Naive thymus-derived CD8-positive, alpha-beta T cell (primary cell): ENCODE measurements at regions of chr1 and their contacts with region 1.

Region 1: DNA sequence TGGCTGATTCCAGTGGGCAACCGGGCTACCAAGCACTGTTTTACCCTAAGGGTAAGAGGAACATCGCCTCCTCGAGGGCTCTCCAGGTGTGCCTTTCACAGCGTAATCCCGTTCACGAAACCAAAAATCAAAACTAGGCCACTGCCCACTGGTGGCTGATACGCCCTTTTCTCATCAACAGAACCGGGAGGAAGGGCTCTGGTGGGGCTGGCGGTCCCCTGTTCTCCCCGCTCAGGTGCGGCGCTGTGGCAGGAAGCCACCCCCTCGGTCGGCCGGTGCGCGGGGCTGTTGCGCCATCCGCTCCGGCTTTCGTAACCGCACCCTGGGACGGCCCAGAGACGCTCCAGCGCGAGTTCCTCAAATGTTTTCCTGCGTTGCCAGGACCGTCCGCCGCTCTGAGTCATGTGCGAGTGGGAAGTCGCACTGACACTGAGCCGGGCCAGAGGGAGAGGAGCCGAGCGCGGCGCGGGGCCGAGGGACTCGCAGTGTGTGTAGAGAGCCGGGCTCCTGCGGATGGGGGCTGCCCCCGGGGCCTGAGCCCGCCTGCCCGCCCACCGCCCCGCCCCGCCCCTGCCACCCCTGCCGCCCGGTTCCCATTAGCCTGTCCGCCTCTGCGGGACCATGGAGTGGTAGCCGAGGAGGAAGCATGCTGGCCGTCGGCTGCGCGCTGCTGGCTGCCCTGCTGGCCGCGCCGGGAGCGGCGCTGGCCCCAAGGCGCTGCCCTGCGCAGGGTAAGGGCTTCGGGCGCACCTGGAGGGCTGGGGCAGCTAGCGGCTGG is at the start of gene IL6R:
- DNase-seq: peak; percentile 57 to 85 (median 74)
- ATAC-seq: peak; percentile 59 to 71
- H3K4me3 Mint-ChIP-seq: peak within 1 kb of the TSS; percentile 88 to 96 (median 93)
- H3K27ac Mint-ChIP-seq: peak within 1 kb of the TSS; percentile 92 to 98 (median 94)
- H3K4me1 Mint-ChIP-seq: peaks cover 42 to 87% (median 78%) of the 10 kb centered on the region in 4 donors
- H3K27me3 Mint-ChIP-seq: no peaks in the 10 kb centered on the region
- polyA plus RNA-seq, gene IL6R: 20.1 to 44.1 (median 28.4) TPM

Region 2: GRCh38 chr1:154324669-154325582 is 80.2 kb before region 1 on chr1 and contains the start of gene ATP8B2:
- POLR2A ChIA-PET with region 1: interaction called, 14 read pairs
- DNase-seq: peak; percentile 72 to 91 (median 82)
- ATAC-seq: peak; percentile 48 to 54
- H3K4me3 Mint-ChIP-seq: peak within 1 kb of the TSS; percentile 86 to 99 (median 95)
- H3K27ac Mint-ChIP-seq: peak within 1 kb of the TSS; percentile 84 to 98 (median 94)
- H3K4me1 Mint-ChIP-seq: peaks cover 23 to 49% (median 46%) of the 10 kb centered on the region in 4 donors
- H3K27me3 Mint-ChIP-seq: peaks cover 0 to 3% (median 0%) of the 10 kb centered on the region in 5 donors
- polyA plus RNA-seq, gene ATP8B2: 48.5 to 65.1 (median 55.6) TPM

Region 3: DNA sequence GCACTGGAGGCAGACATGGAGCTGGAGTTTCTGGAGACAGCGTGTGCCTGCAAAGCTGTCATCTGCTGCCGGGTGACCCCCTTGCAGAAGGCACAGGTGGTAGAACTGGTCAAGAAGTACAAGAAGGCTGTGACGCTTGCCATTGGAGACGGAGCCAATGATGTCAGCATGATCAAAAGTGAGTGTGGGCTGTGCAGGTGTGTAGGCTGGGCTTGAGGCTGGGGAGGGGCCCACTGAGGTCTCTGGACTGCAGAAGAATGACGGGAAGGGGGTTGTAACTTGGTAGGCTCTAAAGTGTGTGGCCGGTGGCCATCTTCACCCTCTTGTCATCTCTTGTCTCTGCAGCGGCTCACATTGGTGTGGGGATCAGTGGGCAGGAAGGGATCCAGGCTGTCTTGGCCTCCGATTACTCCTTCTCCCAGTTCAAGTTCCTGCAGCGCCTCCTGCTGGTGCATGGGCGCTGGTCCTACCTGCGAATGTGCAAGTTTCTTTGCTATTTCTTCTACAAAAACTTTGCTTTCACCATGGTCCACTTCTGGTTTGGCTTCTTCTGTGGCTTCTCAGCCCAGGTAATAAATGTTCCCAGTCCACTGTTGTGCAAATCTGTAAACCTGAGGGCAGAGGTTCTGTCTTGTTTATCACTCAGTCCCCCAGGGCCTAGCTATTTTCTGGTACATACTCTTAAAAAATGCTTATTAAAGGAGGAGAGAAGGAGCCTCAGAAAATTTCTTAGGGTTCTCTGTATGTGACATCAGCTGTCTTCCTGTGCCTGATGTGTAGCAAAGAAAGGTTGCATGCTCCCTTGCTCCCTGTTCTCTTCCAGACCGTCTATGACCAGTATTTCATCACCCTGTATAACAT is 60.0 kb before region 1 on chr1:
- POLR2A ChIA-PET with region 1: interaction called, 19 read pairs
- DNase-seq: peak; percentile 59 to 90 (median 78)
- ATAC-seq: peak; percentile 34 to 42
- H3K4me3 Mint-ChIP-seq: peak overlapping the region; percentile 85 to 98 (median 92)
- H3K27ac Mint-ChIP-seq: peak overlapping the region; percentile 86 to 97 (median 92)
- H3K4me1 Mint-ChIP-seq: peaks cover 47 to 95% (median 89%) of the 10 kb centered on the region in 4 donors
- H3K27me3 Mint-ChIP-seq: no peaks in the 10 kb centered on the region

Region 4: GRCh38 chr1:154386643-154387352 is 18.4 kb before region 1 on chr1:
- POLR2A ChIA-PET with region 1: interaction called, 122 read pairs
- DNase-seq: peak; percentile 41 to 84 (median 65)
- ATAC-seq: peak; percentile 92 to 93
- H3K4me3 Mint-ChIP-seq: peak overlapping the region; percentile 67 to 87 (median 84)
- H3K27ac Mint-ChIP-seq: peak overlapping the region; percentile 93 to 100 (median 97)
- H3K4me1 Mint-ChIP-seq: peaks cover 14 to 56% (median 36%) of the 10 kb centered on the region in 4 donors
- H3K27me3 Mint-ChIP-seq: no peaks in the 10 kb centered on the region

Region 5: GRCh38 chr1:154442006-154442740 is 37.0 kb after region 1 on chr1:
- POLR2A ChIA-PET with region 1: interaction called, 10 read pairs
- DNase-seq: peak in 2 of 10 donors; percentile 15 to 21
- ATAC-seq: peak; percentile 28 to 50
- H3K4me3 Mint-ChIP-seq: peak overlapping the region; percentile 62 to 80 (median 73)
- H3K27ac Mint-ChIP-seq: peak overlapping the region; percentile 87 to 98 (median 94)
- H3K4me1 Mint-ChIP-seq: peaks cover 40 to 70% (median 65%) of the 10 kb centered on the region in 4 donors
- H3K27me3 Mint-ChIP-seq: peaks cover 0 to 4% (median 0%) of the 10 kb centered on the region in 5 donors